ENCODE measurements at regions of chr9 and their contacts with region 1.

Region 1: GRCh38 chr9:72464857-72465592 is 56.4 kb upstream of the TMC1 start:
- DNase-seq: no peak
- ATAC-seq: peak; percentile 87
- H3K4me3 ChIP-seq: no peak overlapping the region
- H3K4me3 Mint-ChIP-seq: peak overlapping the region in 8 of 10 donors; percentile 8 to 54 (median 30)
- H3K27ac ChIP-seq: no peak overlapping the region
- H3K27ac Mint-ChIP-seq: peak overlapping the region in 3 of 9 donors; percentile 1 to 33 (median 3)
- H3K4me1 ChIP-seq: no peaks in the 10 kb centered on the region
- H3K4me1 Mint-ChIP-seq: peaks cover 4 to 16% (median 8%) of the 10 kb centered on the region in 7 donors
- H3K27me3 ChIP-seq: no peaks in the 10 kb centered on the region
- H3K27me3 Mint-ChIP-seq: peaks cover 0 to 4% (median 0%) of the 10 kb centered on the region in 5 donors

Region 2: GRCh38 chr9:71858812-71859211 is 606.2 kb before region 1 on chr9:
- CTCF ChIA-PET with region 1: no interaction called
- POLR2A ChIA-PET with region 1: no interaction called
- intact Hi-C with region 1: no loop called
- DNase-seq: no peak
- ATAC-seq: no peak
- H3K4me3 ChIP-seq: no peak overlapping the region
- H3K4me3 Mint-ChIP-seq: peak overlapping the region in 1 of 10 donors; percentile 2
- H3K27ac ChIP-seq: no peak overlapping the region
- H3K27ac Mint-ChIP-seq: peak overlapping the region in 1 of 9 donors; percentile 3
- H3K4me1 ChIP-seq: no peaks in the 10 kb centered on the region
- H3K4me1 Mint-ChIP-seq: peaks cover 0 to 15% (median 0%) of the 10 kb centered on the region in 7 donors
- H3K27me3 ChIP-seq: no peaks in the 10 kb centered on the region
- H3K27me3 Mint-ChIP-seq: no peaks in the 10 kb centered on the region

Region 3: GRCh38 chr9:72305102-72305546 is 159.9 kb before region 1 on chr9:
- CTCF ChIA-PET with region 1: no interaction called
- POLR2A ChIA-PET with region 1: no interaction called
- intact Hi-C with region 1: no loop called
- DNase-seq: no peak
- ATAC-seq: peak; percentile 94
- H3K4me3 ChIP-seq: no peak overlapping the region
- H3K4me3 Mint-ChIP-seq: peak overlapping the region in 7 of 10 donors; percentile 2 to 56 (median 40)
- H3K27ac ChIP-seq: no peak overlapping the region
- H3K27ac Mint-ChIP-seq: peak overlapping the region in 3 of 9 donors; percentile 17 to 88 (median 68)
- H3K4me1 ChIP-seq: peaks cover 0 to 4% of the 10 kb centered on the region in 2 donors
- H3K4me1 Mint-ChIP-seq: peaks cover 6 to 27% (median 16%) of the 10 kb centered on the region in 7 donors
- H3K27me3 ChIP-seq: no peaks in the 10 kb centered on the region
- H3K27me3 Mint-ChIP-seq: peaks cover 0 to 4% (median 0%) of the 10 kb centered on the region in 5 donors

Region 4: GRCh38 chr9:72557549-72557948 is 92.5 kb after region 1 on chr9:
- CTCF ChIA-PET with region 1: no interaction called
- POLR2A ChIA-PET with region 1: no interaction called
- intact Hi-C with region 1: loop called in 1 of 2 experiments (anchors 5 kb)
- DNase-seq: peak in 1 of 9 donors; percentile 57
- ATAC-seq: peak; percentile 26
- H3K4me3 ChIP-seq: no peak overlapping the region
- H3K4me3 Mint-ChIP-seq: peak overlapping the region in 1 of 10 donors; percentile 4
- H3K27ac ChIP-seq: no peak overlapping the region
- H3K27ac Mint-ChIP-seq: peak overlapping the region in 1 of 9 donors; percentile 89
- H3K4me1 ChIP-seq: no peaks in the 10 kb centered on the region
- H3K4me1 Mint-ChIP-seq: peaks cover 0 to 13% (median 0%) of the 10 kb centered on the region in 7 donors
- H3K27me3 ChIP-seq: no peaks in the 10 kb centered on the region
- H3K27me3 Mint-ChIP-seq: peaks cover 0 to 5% (median 0%) of the 10 kb centered on the region in 5 donors